Panc1 (cell line): ENCODE measurements at regions of chr16 and their contacts with region 1.

Region 1: GRCh38 chr16:86343027-86343787 is 167.1 kb upstream of the FOXF1 start:
- DNase-seq: no peak
- ATAC-seq: no peak
- H3K4me3 ChIP-seq: no peak overlapping the region
- H3K27ac ChIP-seq: no peak overlapping the region
- H3K4me1 ChIP-seq: no peaks in the 10 kb centered on the region
- H3K27me3 ChIP-seq: no peaks in the 10 kb centered on the region; the same call in none of the 2 replicates
- CTCF ChIP-seq: no peak

Region 2: GRCh38 chr16:86252596-86252995 is 90.6 kb before region 1 on chr16:
- CTCF ChIA-PET with region 1: interaction called, 15 read pairs
- POLR2A ChIA-PET with region 1: no interaction called
- in situ Hi-C with region 1: no loop called
- intact Hi-C with region 1: no loop called
- DNase-seq: no peak
- ATAC-seq: no peak
- H3K4me3 ChIP-seq: no peak overlapping the region
- H3K27ac ChIP-seq: no peak overlapping the region
- H3K4me1 ChIP-seq: no peaks in the 10 kb centered on the region
- H3K27me3 ChIP-seq: no peaks in the 10 kb centered on the region
- CTCF ChIP-seq: peak; percentile 64; the same call in 1 of the 2 replicates

Region 3: GRCh38 chr16:86519649-86520316 is 176.6 kb after region 1 on chr16:
- CTCF ChIA-PET with region 1: interaction called, 3 read pairs
- POLR2A ChIA-PET with region 1: no interaction called
- in situ Hi-C with region 1: no loop called
- intact Hi-C with region 1: loop called (anchors 5 kb)
- DNase-seq: no peak
- ATAC-seq: peak; percentile 52
- H3K4me3 ChIP-seq: peak overlapping the region in 1 of 2 experiments; percentile 3; a peak in 3 of 4 replicates
- H3K27ac ChIP-seq: no peak overlapping the region
- H3K4me1 ChIP-seq: no peaks in the 10 kb centered on the region
- H3K27me3 ChIP-seq: peaks cover under 1% of the 10 kb centered on the region; the same call in 1 of the 2 replicates
- CTCF ChIP-seq: peak; percentile 92